Vagina (tissue), 2 donors: ENCODE measurements at regions of chr3 and their contacts with region 1.

Region 1: DNA sequence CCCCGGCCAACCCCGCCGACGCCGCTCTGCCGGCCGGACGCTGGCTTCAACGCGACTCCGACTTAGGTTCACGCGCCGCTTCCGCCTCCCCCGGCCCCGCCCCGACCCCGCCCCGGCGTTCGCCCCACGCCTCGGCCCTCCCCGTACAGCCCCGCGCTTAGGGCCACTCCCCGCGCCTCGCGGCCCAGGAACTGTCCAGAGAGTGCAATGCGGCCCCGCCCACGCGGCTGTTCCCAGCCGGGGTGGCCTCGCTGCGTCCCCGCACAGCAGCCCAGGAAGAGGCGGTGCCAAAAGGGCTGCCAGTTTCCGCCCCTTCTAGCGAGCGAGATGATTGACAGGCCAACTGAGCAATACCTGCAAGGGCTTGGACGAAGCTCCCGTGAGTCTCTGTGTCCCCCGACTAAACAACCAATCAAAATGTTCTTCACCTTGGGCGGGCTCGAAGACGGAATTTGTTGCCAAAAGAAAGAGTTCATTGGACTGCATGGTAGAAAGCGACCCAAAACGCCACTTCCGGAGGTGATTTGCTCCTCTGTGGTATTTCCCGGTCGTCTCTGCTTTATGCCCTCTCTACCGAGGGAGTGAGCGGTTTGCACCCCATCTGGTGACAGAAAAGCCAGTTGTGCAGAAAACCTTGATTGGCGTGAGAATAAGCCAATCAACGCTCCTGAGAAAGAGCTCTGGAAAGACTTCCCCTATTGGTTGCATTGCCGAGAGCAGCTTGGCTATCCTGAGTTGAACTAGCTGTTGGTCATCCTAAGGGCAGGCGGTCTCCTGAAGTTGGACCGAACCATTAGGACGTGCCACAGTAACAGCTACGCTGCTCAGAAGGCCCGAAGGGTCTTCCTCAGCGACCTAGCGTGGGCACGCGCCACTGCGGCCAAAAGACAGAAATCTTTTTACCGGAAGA is at the start of gene UBP1:
- DNase-seq: peak; percentile 98 to 100
- H3K4me3 ChIP-seq: peak within 1 kb of the TSS; percentile 79 to 91
- H3K27ac ChIP-seq: peak within 1 kb of the TSS; percentile 94
- H3K4me1 ChIP-seq: peaks cover 44% of the 10 kb centered on the region
- H3K27me3 ChIP-seq: no peaks in the 10 kb centered on the region
- CTCF ChIP-seq: no peak
- POLR2A ChIP-seq: peak in 1 of 2 donors; percentile 61
- total RNA-seq, gene UBP1: 52.1 TPM

Region 2: GRCh38 chr3:33113772-33114621 is 326.6 kb before region 1 on chr3 and contains the start of gene CRTAP:
- intact Hi-C with region 1: loop called (anchors 1 kb)
- DNase-seq: peak in 1 of 2 donors; percentile 97
- H3K4me3 ChIP-seq: peak within 1 kb of the TSS; percentile 68 to 87
- H3K27ac ChIP-seq: peak within 1 kb of the TSS; percentile 94
- H3K4me1 ChIP-seq: peaks cover 44% of the 10 kb centered on the region
- H3K27me3 ChIP-seq: no peaks in the 10 kb centered on the region
- CTCF ChIP-seq: no peak
- POLR2A ChIP-seq: peak in 1 of 2 donors; percentile 45
- total RNA-seq, gene CRTAP: 272 TPM